GM12878 (cell line): ENCODE measurements at regions of chr9 and their contacts with region 1.

Region 1: GRCh38 chr9:114434878-114435311 is 47.1 kb upstream of the AKNA start:
- DNase-seq: no peak
- ATAC-seq: peak; percentile 77
- H3K4me3 ChIP-seq: no peak overlapping the region
- H3K27ac ChIP-seq: no peak overlapping the region
- H3K4me1 ChIP-seq: no peaks in the 10 kb centered on the region
- H3K27me3 ChIP-seq: peaks cover 0 to 4% of the 10 kb centered on the region in 2 experiments; a peak in 1 of 4 replicates
- CTCF ChIP-seq: peak; percentile 58 to 75 (median 71)
- EP300 ChIP-seq: no peak
- POLR2A ChIP-seq: no peak
- RAD21 ChIP-seq: peak; percentile 91

Region 2: GRCh38 chr9:114348906-114349482 is 85.9 kb before region 1 on chr9:
- CTCF ChIA-PET with region 1: no interaction called
- POLR2A ChIA-PET with region 1: no interaction called
- RAD21 ChIA-PET with region 1: no interaction called
- SMC1A ChIA-PET with region 1: no interaction called
- in situ Hi-C with region 1: no loop called
- intact Hi-C with region 1: no loop called
- DNase-seq: peak; percentile 94
- ATAC-seq: peak; percentile 96
- H3K4me3 ChIP-seq: no peak overlapping the region
- H3K27ac ChIP-seq: peak overlapping the region; percentile 29
- H3K4me1 ChIP-seq: peaks cover 25% of the 10 kb centered on the region
- H3K27me3 ChIP-seq: no peaks in the 10 kb centered on the region
- CTCF ChIP-seq: no peak
- EP300 ChIP-seq: peak; percentile 65 to 75
- POLR2A ChIP-seq: peak; percentile 59; the same call in 1 of the 2 replicates
- RAD21 ChIP-seq: no peak

Region 3: DNA sequence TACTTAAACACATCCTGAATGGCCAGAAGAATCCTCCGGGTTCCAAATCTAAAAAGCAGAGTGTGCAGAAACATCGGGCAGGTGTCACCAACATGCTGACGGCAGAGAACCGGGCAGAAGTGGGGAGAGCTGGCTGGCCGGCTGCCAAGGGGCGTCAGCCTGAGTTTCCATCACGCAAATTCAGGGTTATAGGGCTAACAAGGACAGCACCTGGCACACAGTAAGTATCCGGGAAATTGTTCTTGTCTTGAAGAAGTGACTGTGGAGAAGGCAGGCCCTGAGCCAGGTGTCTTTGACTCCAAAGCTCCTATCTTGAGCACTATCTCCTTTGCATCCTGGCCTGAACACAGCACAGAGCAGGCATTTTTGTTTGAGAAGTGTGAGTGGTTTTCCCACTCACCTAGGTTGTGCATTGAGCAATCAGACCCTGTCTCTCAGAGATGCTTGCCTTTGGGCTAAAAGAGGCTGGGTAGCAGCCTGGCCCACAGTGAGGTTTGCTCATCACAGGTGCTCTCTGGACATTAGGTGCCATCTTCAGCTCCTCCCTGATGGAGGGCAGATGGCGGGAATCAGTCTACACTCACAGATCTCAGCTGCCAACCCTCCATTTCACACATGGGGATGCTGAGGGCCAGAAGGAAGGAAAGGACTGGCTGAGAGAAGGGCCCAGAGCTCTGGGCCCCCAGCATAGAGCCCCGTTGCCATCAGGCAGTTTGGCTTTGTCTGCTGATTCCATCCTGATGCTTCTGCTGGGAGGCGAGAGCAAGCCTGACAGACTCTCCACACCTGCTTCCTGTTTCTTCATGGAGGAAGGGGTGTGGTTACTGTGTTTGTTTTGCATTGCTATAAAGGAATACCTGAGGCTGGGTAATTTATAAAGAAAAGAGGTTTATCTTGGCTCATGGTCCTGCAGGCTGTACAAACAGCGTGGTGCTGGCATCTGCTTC is 17.6 kb after region 1 on chr9:
- CTCF ChIA-PET with region 1: interaction called, 14 read pairs
- POLR2A ChIA-PET with region 1: interaction called, 5 read pairs
- RAD21 ChIA-PET with region 1: interaction called, 6 read pairs
- SMC1A ChIA-PET with region 1: interaction called, 41 read pairs
- in situ Hi-C with region 1: no loop called
- intact Hi-C with region 1: no loop called
- DNase-seq: no peak
- ATAC-seq: peak; percentile 49
- H3K4me3 ChIP-seq: no peak overlapping the region
- H3K27ac ChIP-seq: no peak overlapping the region
- H3K4me1 ChIP-seq: peaks cover 17% of the 10 kb centered on the region
- H3K27me3 ChIP-seq: no peaks in the 10 kb centered on the region; a peak in 1 of 4 replicates
- CTCF ChIP-seq: no peak
- EP300 ChIP-seq: no peak
- POLR2A ChIP-seq: no peak
- RAD21 ChIP-seq: no peak